MCF 10A (cell line): ENCODE measurements at regions of chr7 and their contacts with region 1.

Region 1: GRCh38 chr7:51162724-51163329 is 153.8 kb downstream of the COBL start:
- DNase-seq: peak; percentile 89
- H3K4me3 Mint-ChIP-seq: no peak overlapping the region
- H3K27ac Mint-ChIP-seq: no peak overlapping the region
- H3K4me1 Mint-ChIP-seq: peaks cover 5% of the 10 kb centered on the region
- H3K27me3 Mint-ChIP-seq: no peaks in the 10 kb centered on the region
- CTCF ChIP-seq: peak; percentile 55

Region 2: GRCh38 chr7:50653126-50653864 is 509.5 kb before region 1 on chr7:
- CTCF ChIA-PET with region 1: interaction called, 12 read pairs
- POLR2A ChIA-PET with region 1: no interaction called
- intact Hi-C with region 1: no loop called
- DNase-seq: peak; percentile 71
- H3K4me3 Mint-ChIP-seq: no peak overlapping the region
- H3K27ac Mint-ChIP-seq: no peak overlapping the region
- H3K4me1 Mint-ChIP-seq: peaks cover 22% of the 10 kb centered on the region
- H3K27me3 Mint-ChIP-seq: no peaks in the 10 kb centered on the region
- CTCF ChIP-seq: no peak

Region 3: GRCh38 chr7:51019191-51019844 is 143.5 kb before region 1 on chr7:
- CTCF ChIA-PET with region 1: no interaction called
- POLR2A ChIA-PET with region 1: no interaction called
- intact Hi-C with region 1: no loop called
- DNase-seq: peak; percentile 81
- H3K4me3 Mint-ChIP-seq: no peak overlapping the region
- H3K27ac Mint-ChIP-seq: no peak overlapping the region
- H3K4me1 Mint-ChIP-seq: peaks cover 7% of the 10 kb centered on the region
- H3K27me3 Mint-ChIP-seq: no peaks in the 10 kb centered on the region
- CTCF ChIP-seq: no peak

Region 4: GRCh38 chr7:51090411-51090810 is 72.4 kb before region 1 on chr7:
- CTCF ChIA-PET with region 1: interaction called, 11 read pairs
- POLR2A ChIA-PET with region 1: no interaction called
- intact Hi-C with region 1: no loop called
- DNase-seq: no peak
- H3K4me3 Mint-ChIP-seq: no peak overlapping the region
- H3K27ac Mint-ChIP-seq: no peak overlapping the region
- H3K4me1 Mint-ChIP-seq: peaks cover 5% of the 10 kb centered on the region
- H3K27me3 Mint-ChIP-seq: no peaks in the 10 kb centered on the region
- CTCF ChIP-seq: no peak

Region 5: GRCh38 chr7:51187941-51188340 is 25.1 kb after region 1 on chr7:
- CTCF ChIA-PET with region 1: interaction called, 12 read pairs
- POLR2A ChIA-PET with region 1: no interaction called
- intact Hi-C with region 1: no loop called
- DNase-seq: no peak
- H3K4me3 Mint-ChIP-seq: no peak overlapping the region
- H3K27ac Mint-ChIP-seq: no peak overlapping the region
- H3K4me1 Mint-ChIP-seq: no peaks in the 10 kb centered on the region
- H3K27me3 Mint-ChIP-seq: no peaks in the 10 kb centered on the region
- CTCF ChIP-seq: no peak

Region 6: GRCh38 chr7:51315393-51316261 is 152.8 kb after region 1 on chr7:
- CTCF ChIA-PET with region 1: interaction called, 8 read pairs
- POLR2A ChIA-PET with region 1: interaction called, 3 read pairs
- intact Hi-C with region 1: loop called (anchors 2 kb)
- DNase-seq: peak; percentile 67
- H3K4me3 Mint-ChIP-seq: peak overlapping the region; percentile 85
- H3K27ac Mint-ChIP-seq: peak overlapping the region; percentile 92
- H3K4me1 Mint-ChIP-seq: peaks cover 11% of the 10 kb centered on the region
- H3K27me3 Mint-ChIP-seq: no peaks in the 10 kb centered on the region
- CTCF ChIP-seq: no peak

Region 7: DNA sequence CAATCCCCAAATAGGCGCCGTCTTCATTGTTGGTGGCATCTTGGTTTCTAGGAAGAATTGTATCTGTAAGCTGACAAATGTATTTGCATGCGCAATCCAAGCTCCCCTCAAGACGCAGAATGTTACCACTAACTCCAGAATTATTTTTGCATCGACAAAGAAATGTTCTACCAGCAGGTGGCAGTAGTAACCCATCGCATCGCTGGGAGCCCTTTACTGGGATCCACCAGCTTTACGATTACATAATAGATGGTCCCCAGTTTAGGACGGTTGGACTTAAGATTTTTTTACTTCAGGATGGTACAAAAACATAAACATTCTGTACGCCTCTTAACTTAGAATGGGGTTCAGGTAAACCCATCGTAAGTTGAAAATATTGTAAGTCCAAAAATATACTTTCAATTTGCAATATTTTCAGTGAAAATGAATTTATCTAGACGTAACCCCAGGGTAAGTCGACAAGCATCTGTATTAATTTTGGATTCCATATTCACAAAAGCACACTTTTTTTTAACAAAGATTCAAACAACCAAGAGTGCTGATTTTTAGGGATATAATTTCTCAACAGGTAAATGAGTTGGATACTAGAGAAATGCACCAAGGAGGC is 267.8 kb after region 1 on chr7:
- CTCF ChIA-PET with region 1: interaction called, 10 read pairs
- POLR2A ChIA-PET with region 1: no interaction called
- intact Hi-C with region 1: no loop called
- DNase-seq: peak; percentile 67
- H3K4me3 Mint-ChIP-seq: no peak overlapping the region
- H3K27ac Mint-ChIP-seq: no peak overlapping the region
- H3K4me1 Mint-ChIP-seq: no peaks in the 10 kb centered on the region
- H3K27me3 Mint-ChIP-seq: peaks cover 83% of the 10 kb centered on the region
- CTCF ChIP-seq: peak; percentile 84

Region 8: DNA sequence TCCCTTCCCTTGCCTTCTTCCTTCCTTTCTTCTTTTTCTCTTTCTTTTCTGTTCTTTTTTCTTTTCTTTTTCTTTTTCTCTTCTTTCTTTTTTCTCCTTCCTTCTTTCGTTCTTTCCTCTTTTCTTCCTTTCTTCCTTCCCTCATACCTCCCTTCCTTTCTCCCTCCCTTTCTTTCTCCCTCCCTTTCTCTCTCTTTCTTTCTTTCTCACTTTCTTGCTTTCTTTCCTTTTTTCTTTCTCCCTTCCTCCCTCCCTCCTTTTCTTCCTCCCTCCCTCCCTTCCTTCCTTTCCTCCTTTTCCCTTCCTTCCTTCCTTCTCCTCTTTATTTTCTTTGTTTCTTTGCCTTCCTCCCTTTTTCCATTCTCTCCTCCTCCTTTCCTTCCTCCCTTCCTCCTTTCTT is 1968.9 kb after region 1 on chr7:
- CTCF ChIA-PET with region 1: no interaction called
- POLR2A ChIA-PET with region 1: no interaction called
- intact Hi-C with region 1: no loop called
- DNase-seq: no peak
- H3K4me3 Mint-ChIP-seq: no peak overlapping the region
- H3K27ac Mint-ChIP-seq: no peak overlapping the region
- H3K4me1 Mint-ChIP-seq: no peaks in the 10 kb centered on the region
- H3K27me3 Mint-ChIP-seq: peaks cover 61% of the 10 kb centered on the region
- CTCF ChIP-seq: no peak